Endothelial cell of umbilical vein (primary cell): ENCODE measurements at regions of chr18 and their contacts with region 1.

Region 1: GRCh38 chr18:24987303-24988252 is 364.4 kb downstream of the ZNF521 start:
- DNase-seq: peak; percentile 35
- H3K4me3 ChIP-seq: no peak overlapping the region
- H3K27ac ChIP-seq: no peak overlapping the region
- H3K4me1 ChIP-seq: peaks cover 46% of the 10 kb centered on the region
- H3K27me3 ChIP-seq: no peaks in the 10 kb centered on the region
- CTCF ChIP-seq: no peak
- POLR2A ChIP-seq: no peak

Region 2: DNA sequence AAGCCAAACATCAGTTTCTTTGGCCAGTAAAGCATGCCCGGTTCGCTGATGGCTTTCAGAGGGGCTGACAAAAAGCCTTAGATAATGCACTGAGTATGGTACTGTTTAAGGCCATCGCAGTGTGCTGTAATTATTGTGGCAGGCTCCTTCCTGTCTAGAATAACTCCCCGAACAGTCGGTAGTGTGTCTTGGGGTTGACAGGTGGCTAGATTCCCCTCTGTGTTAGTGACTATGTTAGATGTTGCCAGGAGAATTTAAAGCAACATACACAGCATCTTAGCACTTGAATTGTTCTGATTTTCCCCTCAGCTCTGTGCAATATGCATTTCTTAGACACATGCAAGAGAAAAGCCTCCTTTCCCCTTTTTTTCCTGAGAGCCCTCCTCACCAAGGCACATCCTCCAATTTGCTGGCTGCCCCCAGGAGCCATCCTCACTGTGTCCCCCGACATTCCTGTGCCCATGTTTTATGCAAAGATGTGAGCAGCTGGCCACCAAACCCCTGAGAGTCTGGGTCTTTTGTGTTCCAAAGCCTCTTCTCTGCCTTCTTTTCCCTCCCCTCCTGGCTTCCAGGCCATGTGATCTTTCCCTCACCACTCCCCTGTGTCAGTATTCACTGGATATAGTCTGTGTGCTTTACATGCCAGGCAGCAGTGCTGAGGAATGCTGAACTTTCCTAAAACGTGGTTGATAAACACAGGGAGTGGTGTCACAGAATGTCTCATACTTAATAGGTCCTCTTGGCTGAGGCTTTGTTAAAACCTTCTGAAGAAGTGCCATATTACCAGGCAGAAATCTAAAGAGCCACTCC is 195.6 kb before region 1 on chr18:
- CTCF ChIA-PET with region 1: no interaction called
- POLR2A ChIA-PET with region 1: no interaction called
- dilution Hi-C with region 1: no loop called
- intact Hi-C with region 1: loop called (anchors 10 kb)
- DNase-seq: no peak
- H3K4me3 ChIP-seq: no peak overlapping the region
- H3K27ac ChIP-seq: no peak overlapping the region
- H3K4me1 ChIP-seq: no peaks in the 10 kb centered on the region
- H3K27me3 ChIP-seq: peaks cover 0 to 4% of the 10 kb centered on the region in 2 experiments
- CTCF ChIP-seq: no peak
- POLR2A ChIP-seq: no peak

Region 3: DNA sequence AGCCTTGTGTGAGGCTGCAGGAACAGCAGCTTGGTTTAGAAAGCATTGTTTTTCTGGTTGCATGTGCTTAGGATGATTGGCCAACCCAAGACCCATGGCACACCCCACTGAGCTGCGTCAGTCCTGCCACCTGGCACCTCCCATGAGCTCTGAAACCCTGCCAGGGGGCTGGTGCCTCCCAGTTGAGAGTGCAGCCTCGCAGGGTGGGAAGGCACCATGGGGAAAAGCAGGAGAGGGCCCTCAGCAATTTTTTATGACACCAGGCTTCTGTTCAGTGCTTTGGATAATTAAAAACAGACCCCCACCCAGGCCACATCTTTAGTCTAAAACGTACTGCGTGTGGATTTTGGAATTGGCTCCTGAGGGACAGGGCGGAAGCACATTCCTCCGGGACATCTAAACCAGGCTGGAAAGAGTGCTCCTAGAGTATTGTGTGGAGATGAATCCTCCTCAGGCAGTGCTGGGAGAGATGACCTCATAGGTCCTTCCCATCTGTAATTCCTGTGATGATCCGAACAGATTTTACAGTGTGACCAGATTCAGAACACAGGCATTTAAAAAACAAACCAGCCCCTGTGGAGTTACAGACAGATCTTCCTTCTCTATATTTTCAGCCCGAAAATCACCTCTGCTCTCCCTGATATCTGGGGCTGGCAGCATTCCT is 73.9 kb before region 1 on chr18:
- CTCF ChIA-PET with region 1: no interaction called
- POLR2A ChIA-PET with region 1: no interaction called
- dilution Hi-C with region 1: no loop called
- intact Hi-C with region 1: loop called (anchors 5 kb)
- DNase-seq: no peak
- H3K4me3 ChIP-seq: no peak overlapping the region
- H3K27ac ChIP-seq: peak overlapping the region; percentile 65
- H3K4me1 ChIP-seq: peaks cover 33% of the 10 kb centered on the region
- H3K27me3 ChIP-seq: no peaks in the 10 kb centered on the region
- CTCF ChIP-seq: no peak
- POLR2A ChIP-seq: no peak

Region 4: DNA sequence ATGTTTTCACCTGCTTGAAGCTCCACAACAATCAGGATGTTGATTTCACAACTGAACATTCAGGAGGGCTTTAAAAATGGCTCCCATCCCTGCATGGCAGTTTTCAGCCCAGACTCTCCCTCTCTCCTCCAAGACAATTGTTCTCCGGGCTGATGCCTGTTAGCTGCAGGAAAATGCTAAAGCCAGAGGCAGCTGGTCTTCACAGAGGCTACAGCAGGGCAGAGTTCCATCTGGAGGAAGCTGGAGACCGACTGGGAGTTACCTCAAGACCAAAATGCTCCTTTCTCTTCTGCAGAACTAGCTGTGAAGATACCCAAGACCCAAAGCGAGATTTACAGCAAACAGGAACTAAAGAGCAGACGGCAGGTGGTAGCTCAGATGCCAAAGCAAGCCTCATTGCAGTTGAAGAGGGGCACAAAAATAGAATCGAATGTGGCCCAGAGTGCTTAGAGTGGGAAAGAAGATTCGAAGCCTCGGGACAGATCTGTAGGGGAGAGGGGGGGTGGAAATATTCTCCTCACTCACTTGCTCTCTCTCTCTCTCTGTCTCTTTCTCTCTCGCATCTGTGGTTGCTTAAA is 59.2 kb before region 1 on chr18:
- CTCF ChIA-PET with region 1: no interaction called
- POLR2A ChIA-PET with region 1: no interaction called
- dilution Hi-C with region 1: no loop called
- intact Hi-C with region 1: loop called (anchors 5 kb)
- DNase-seq: no peak
- H3K4me3 ChIP-seq: no peak overlapping the region
- H3K27ac ChIP-seq: no peak overlapping the region
- H3K4me1 ChIP-seq: no peaks in the 10 kb centered on the region
- H3K27me3 ChIP-seq: no peaks in the 10 kb centered on the region
- CTCF ChIP-seq: no peak
- POLR2A ChIP-seq: no peak

Region 5: DNA sequence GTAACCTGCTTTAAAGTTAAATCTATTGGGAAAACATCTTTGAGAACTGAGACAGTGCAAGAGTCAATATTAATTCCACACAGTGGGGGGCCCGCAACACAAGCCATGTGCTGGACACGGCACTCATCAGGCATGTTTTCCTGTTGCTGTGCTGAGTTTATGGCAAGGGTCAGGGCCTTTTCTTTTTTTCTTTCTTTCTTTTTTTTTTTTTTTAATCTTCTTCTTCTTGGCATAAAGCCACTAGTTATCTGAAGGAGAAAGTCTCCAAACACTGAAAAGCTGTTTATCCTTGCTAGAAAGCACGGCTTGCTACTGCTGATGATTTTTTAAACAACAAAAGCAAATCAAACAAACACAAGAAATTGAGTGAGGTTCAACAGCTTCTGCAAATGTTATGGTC is 112.3 kb after region 1 on chr18:
- CTCF ChIA-PET with region 1: no interaction called
- POLR2A ChIA-PET with region 1: no interaction called
- dilution Hi-C with region 1: no loop called
- intact Hi-C with region 1: loop called (anchors 5 kb)
- DNase-seq: peak; percentile 63
- H3K4me3 ChIP-seq: no peak overlapping the region
- H3K27ac ChIP-seq: peak overlapping the region; percentile 20
- H3K4me1 ChIP-seq: peaks cover 58% of the 10 kb centered on the region
- H3K27me3 ChIP-seq: no peaks in the 10 kb centered on the region
- CTCF ChIP-seq: no peak
- POLR2A ChIP-seq: no peak